Head of caudate nucleus (tissue), 42 donors: ENCODE measurements at regions of chr4 and their contacts with region 1.

Region 1: DNA sequence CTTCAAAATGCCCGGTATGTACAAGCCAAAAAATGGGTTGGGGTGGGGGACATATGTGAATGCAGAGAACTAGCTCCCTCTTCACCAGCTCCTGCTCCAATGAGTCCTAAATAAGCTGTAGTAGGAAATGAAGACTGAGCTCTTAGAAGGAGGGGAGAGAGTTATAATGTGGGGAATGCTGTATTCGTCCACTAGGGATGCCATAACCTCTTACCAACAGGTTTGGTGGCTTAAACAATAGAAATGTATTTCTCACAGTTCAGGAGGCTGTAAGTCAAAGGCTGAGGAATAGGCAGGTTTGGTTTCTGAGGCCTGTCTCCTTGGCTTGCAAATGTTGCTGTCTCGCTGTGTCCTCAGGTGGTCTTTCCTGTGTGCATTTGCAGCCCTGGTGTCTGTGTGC is 4.4 kb upstream of the INPP4B start:
- DNase-seq: no peak

Region 2: GRCh38 chr4:141311241-141312204 is 1539.0 kb before region 1 on chr4:
- intact Hi-C with region 1: loop called (anchors 10 kb)
- DNase-seq: no peak

Region 3: DNA sequence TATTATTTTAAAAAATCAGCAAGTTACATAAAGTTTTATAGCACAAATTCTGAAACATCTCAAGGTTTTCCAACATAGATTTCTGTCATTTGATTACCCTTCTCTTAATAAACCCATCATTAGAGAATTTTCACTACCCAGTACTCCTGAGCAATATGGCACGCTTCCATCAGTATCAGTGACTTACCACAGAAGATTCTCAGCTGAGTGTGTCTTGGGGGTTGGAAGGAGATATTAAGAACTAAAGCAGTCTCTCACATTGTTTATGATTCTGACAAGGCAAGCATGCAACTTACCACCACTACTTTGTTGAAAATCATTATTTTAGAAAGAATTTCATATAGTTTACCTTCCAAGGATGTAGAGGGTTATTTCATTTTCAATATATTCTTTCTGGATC is 72.0 kb before region 1 on chr4:
- intact Hi-C with region 1: no loop called
- DNase-seq: no peak